ENCODE measurements at regions of chr10 and their contacts with region 1.

Region 1: DNA sequence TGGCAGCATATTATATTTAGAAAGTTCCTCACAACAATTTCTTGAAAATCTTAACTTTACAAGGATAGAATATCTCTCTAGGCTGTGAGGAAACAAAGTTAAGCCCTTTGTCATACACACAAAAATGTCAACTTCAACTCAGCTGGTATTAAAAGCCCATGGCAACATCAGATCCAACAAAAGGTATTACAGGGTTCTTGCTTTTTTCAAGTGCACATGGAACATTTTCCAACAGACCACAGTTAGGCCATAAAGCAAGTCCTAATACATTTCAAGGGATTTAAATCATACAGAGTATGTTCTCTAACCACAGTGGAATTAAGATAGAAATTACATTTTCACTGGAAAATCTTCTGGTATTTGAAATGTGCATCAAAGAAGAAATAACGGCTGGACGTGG is 71.9 kb upstream of the OIT3 start:
- DNase-seq: no peak
- ATAC-seq: no peak
- H3K4me3 ChIP-seq: no peak overlapping the region
- H3K27ac ChIP-seq: no peak overlapping the region
- H3K4me1 ChIP-seq: no peaks in the 10 kb centered on the region
- H3K27me3 ChIP-seq: peaks cover 10% of the 10 kb centered on the region; the same call in 1 of the 2 replicates
- CTCF ChIP-seq: no peak

Region 2: GRCh38 chr10:72783410-72783833 is 38.2 kb before region 1 on chr10:
- CTCF ChIA-PET with region 1: no interaction called
- POLR2A ChIA-PET with region 1: no interaction called
- intact Hi-C with region 1: no loop called
- DNase-seq: peak; percentile 55
- ATAC-seq: peak; percentile 20; the same call in 1 of the 2 replicates
- H3K4me3 ChIP-seq: no peak overlapping the region
- H3K27ac ChIP-seq: no peak overlapping the region
- H3K4me1 ChIP-seq: peaks cover 33% of the 10 kb centered on the region
- H3K27me3 ChIP-seq: peaks cover 35% of the 10 kb centered on the region
- CTCF ChIP-seq: no peak

Region 3: GRCh38 chr10:73287441-73287840 is 465.8 kb after region 1 on chr10:
- CTCF ChIA-PET with region 1: no interaction called
- POLR2A ChIA-PET with region 1: interaction called, 18 read pairs
- intact Hi-C with region 1: no loop called
- DNase-seq: no peak
- ATAC-seq: no peak
- H3K4me3 ChIP-seq: no peak overlapping the region
- H3K27ac ChIP-seq: no peak overlapping the region
- H3K4me1 ChIP-seq: no peaks in the 10 kb centered on the region
- H3K27me3 ChIP-seq: no peaks in the 10 kb centered on the region
- CTCF ChIP-seq: no peak